Pancreas (tissue), 10 donors: ENCODE measurements at regions of chr12 and their contacts with region 1.

Region 1: DNA sequence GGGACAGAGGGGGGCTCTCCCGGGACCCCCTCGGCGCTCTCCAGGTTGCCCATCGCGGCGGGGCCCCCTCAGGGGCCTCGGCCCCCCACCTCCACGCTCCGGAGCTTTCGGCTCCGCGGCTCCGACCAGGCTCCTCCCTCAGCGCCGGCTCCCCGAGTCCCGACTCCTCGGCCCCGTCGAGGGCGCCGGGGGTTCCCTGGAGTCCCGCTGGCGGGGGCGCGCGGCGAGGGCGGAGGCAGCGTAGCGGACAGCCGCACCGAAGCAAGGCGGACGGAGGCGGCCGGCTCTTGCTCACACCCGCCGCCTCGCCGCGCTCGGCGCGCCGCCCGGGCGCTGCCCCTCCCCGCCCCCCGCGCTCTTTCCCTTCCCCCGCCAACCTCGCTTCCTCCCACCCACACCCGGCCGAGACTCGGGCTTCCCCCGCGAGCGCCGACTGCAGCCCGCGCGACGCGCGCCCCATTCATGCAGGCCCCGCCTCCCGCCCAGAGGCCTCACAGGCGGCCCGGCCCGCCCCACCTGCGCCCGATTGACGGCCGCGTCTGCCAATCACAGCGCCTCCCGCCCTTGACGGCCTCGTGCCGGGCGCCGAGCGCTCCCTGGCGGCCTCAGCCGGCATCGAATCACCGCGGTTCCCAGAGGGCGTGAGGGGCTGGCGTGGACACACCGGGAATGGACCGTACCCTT is at the start of gene FMNL3:
- DNase-seq: peak; percentile 95 to 100 (median 98)
- ATAC-seq: peak; percentile 99 to 100 (median 100)
- H3K4me3 ChIP-seq: peak within 1 kb of the TSS; percentile 35 to 86 (median 53)
- H3K27ac ChIP-seq: peak within 1 kb of the TSS in 3 of 4 donors; percentile 33 to 68 (median 55)
- H3K4me1 ChIP-seq: no peaks in the 10 kb centered on the region
- H3K27me3 ChIP-seq: peaks cover 0 to 7% (median 3%) of the 10 kb centered on the region in 4 donors
- CTCF ChIP-seq: peak; percentile 91 to 94 (median 93)
- total RNA-seq, gene FMNL3: 1.8 to 13.5 (median 2.7) TPM

Region 2: GRCh38 chr12:49482095-49483051 is 224.9 kb before region 1 on chr12:
- intact Hi-C with region 1: no loop called
- DNase-seq: no peak
- ATAC-seq: no peak
- H3K4me3 ChIP-seq: no peak overlapping the region
- H3K27ac ChIP-seq: no peak overlapping the region
- H3K4me1 ChIP-seq: no peaks in the 10 kb centered on the region
- H3K27me3 ChIP-seq: no peaks in the 10 kb centered on the region
- CTCF ChIP-seq: no peak

Region 3: GRCh38 chr12:49588721-49589516 is 118.4 kb before region 1 on chr12:
- intact Hi-C with region 1: no loop called
- DNase-seq: no peak
- ATAC-seq: peak in 1 of 4 donors; percentile 17
- H3K4me3 ChIP-seq: no peak overlapping the region
- H3K27ac ChIP-seq: no peak overlapping the region
- H3K4me1 ChIP-seq: no peaks in the 10 kb centered on the region
- H3K27me3 ChIP-seq: no peaks in the 10 kb centered on the region
- CTCF ChIP-seq: no peak

Region 4: GRCh38 chr12:49644620-49644994 is 62.7 kb before region 1 on chr12:
- intact Hi-C with region 1: loop called (anchors 5 to 10 kb)
- DNase-seq: peak in 5 of 6 donors; percentile 36 to 75 (median 67)
- ATAC-seq: peak; percentile 61 to 91 (median 88)
- H3K4me3 ChIP-seq: no peak overlapping the region
- H3K27ac ChIP-seq: no peak overlapping the region
- H3K4me1 ChIP-seq: no peaks in the 10 kb centered on the region
- H3K27me3 ChIP-seq: no peaks in the 10 kb centered on the region
- CTCF ChIP-seq: peak; percentile 54 to 93 (median 82)

Region 5: GRCh38 chr12:50242751-50243191 is 535.5 kb after region 1 on chr12:
- intact Hi-C with region 1: no loop called
- DNase-seq: no peak
- ATAC-seq: no peak
- H3K4me3 ChIP-seq: no peak overlapping the region
- H3K27ac ChIP-seq: peak overlapping the region in 2 of 4 donors; percentile 64 to 67
- H3K4me1 ChIP-seq: peaks cover 7 to 35% (median 16%) of the 10 kb centered on the region in 3 donors
- H3K27me3 ChIP-seq: no peaks in the 10 kb centered on the region
- CTCF ChIP-seq: no peak